ENCODE measurements at regions of chr3 and their contacts with region 1.

Region 1: DNA sequence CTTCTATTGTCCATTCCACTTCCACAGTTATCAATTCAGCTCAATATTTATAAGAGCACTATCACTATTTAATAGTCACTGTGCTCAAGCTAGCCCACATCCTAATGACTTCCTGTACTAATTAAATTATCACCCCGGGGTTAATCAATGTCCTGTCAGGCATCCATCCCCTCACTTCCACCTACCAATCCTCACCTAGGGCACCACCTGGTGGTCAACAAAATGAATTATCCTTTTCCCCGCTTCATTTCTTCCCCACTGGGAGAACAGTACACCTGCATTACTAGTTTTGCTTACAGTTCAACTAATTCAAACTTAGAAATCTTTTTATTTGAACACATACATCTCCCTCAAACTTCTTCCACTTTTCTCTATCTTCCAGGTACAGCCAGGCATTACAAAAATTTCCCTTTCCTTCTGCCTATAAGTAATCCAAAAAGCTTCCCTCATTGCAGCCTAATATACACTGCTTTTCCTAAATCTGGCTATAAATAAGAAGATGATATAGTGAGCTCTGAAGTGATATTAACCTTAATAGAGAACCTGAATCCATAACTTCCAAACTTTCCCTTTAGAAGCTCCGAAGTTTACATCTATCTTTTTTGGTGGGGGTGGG is 68.5 kb downstream of the TMCC1 start:
- DNase-seq: peak; percentile 33 to 68 (median 55)
- H3K4me3 ChIP-seq: no peak overlapping the region
- H3K4me3 Mint-ChIP-seq: no peak overlapping the region
- H3K27ac ChIP-seq: no peak overlapping the region
- H3K27ac Mint-ChIP-seq: peak overlapping the region in 5 of 7 donors; percentile 13 to 73 (median 16)
- H3K4me1 ChIP-seq: peaks cover 48 to 54% of the 10 kb centered on the region in 2 donors
- H3K4me1 Mint-ChIP-seq: peaks cover 51% of the 10 kb centered on the region
- H3K27me3 ChIP-seq: no peaks in the 10 kb centered on the region
- H3K27me3 Mint-ChIP-seq: peaks cover 0 to 2% (median 0%) of the 10 kb centered on the region in 3 donors
- CTCF ChIP-seq: peak; percentile 89

Region 2: DNA sequence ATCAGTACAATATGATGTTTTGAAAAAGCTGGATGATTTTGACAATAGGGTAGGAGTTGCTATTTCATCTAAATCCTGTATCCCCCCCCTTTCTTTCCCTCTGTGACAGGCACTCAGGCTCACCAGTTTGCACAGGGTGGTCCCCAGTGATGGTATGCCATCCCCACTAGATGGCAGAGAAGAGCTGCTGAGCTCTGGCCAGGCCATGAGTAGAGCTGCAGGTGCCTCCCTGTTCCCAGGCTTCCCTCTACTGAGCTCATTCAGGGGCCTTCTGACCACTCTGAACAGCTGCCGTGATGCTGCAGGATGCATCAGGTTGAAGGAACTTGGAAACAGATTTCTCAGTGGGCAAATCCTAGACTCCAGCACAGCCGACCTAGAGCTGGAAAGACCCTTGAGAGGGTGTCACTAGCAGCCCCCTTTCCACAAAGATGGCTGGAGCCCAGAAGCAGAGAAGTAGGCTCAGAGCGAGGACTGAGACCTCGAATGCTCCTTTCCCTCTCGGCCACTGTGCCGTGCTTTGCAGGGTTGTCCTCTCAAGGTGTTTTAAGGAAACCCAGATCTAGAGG is 441.7 kb before region 1 on chr3:
- intact Hi-C with region 1: loop called in 1 of 2 experiments (anchors 5 kb)
- DNase-seq: peak; percentile 12 to 36 (median 34)
- H3K4me3 ChIP-seq: no peak overlapping the region
- H3K4me3 Mint-ChIP-seq: no peak overlapping the region
- H3K27ac ChIP-seq: no peak overlapping the region
- H3K27ac Mint-ChIP-seq: peak overlapping the region in 1 of 7 donors; percentile 11
- H3K4me1 ChIP-seq: peaks cover 6% of the 10 kb centered on the region in 2 donors
- H3K4me1 Mint-ChIP-seq: peaks cover 8% of the 10 kb centered on the region
- H3K27me3 ChIP-seq: no peaks in the 10 kb centered on the region
- H3K27me3 Mint-ChIP-seq: no peaks in the 10 kb centered on the region
- CTCF ChIP-seq: peak; percentile 72

Region 3: DNA sequence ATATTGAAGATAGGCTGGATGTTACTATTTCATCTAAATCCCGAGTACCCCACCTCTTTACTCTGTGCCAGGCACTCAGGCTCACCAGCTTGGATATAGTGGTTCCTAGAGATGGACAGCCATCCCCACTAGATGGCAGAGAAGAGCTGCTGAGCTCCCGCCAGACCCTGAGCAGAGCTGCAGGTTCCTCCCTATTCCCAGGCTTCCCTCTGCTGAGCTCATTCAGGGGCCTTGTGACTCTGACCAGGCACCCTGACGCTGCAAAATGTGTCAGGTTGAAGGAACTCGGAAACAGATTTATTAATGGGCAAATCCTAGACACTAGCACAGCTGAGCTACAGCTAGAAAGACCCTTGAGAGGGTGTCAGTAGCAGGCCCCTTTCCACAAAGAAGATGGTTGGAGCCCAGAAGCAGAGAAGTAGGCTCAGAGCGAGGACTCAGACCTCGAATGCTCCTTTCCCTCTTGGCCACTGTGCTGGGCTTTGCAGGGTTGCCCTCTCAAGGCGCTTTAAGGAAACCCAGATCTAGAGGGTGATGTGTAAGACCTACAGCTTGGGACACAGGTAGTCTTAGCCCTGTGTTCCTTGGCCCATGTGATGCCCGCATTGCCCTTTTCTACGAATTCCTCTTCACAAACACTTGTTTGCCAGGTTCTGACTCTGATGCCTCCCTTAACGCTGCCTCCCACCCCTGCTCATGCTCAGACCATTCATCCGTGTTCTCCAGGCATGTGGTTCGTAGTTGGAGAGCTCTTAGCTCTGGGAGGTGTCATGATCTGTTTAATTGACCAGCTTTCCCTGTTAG is 334.6 kb before region 1 on chr3:
- intact Hi-C with region 1: loop called (anchors 2 to 5 kb)
- DNase-seq: peak; percentile 94 to 98 (median 96)
- H3K4me3 ChIP-seq: no peak overlapping the region
- H3K4me3 Mint-ChIP-seq: peak overlapping the region in 1 of 2 donors; percentile 26
- H3K27ac ChIP-seq: peak overlapping the region; percentile 89
- H3K27ac Mint-ChIP-seq: peak overlapping the region; percentile 87 to 98 (median 94)
- H3K4me1 ChIP-seq: peaks cover 50 to 55% of the 10 kb centered on the region in 2 donors
- H3K4me1 Mint-ChIP-seq: peaks cover 53% of the 10 kb centered on the region
- H3K27me3 ChIP-seq: no peaks in the 10 kb centered on the region
- H3K27me3 Mint-ChIP-seq: peaks cover 0 to 1% (median 0%) of the 10 kb centered on the region in 3 donors
- CTCF ChIP-seq: peak; percentile 91

Region 4: DNA sequence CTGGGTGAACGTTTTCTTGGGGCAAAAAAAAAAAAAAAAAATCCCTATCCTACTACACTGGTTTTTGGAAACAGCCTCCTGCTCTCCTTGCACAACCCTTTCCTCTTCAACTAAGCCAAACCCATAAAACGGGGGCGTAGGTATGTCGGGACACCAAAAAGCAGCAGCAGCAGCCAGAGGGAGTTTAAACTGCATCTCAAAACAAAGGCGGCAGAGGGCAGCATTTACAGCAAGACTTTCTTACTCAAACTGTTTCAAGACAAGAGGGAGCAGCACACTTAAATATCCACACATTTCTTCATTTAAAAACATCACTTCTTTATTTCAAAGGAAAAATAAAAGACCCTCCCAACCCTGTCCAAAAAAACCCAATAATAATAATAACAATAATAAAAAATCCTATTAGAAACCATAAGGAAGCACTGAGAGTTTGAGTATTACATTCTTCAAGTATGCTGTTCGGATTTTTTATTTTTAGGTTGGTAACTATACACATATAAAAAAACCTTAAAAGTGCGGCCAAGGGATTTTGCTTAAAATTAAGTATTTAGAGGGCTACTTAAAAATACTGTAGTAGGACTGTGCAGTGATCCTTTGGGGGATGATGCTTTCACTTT is 174.7 kb before region 1 on chr3:
- intact Hi-C with region 1: loop called (anchors 2 to 10 kb)
- DNase-seq: peak; percentile 34 to 57 (median 47)
- H3K4me3 ChIP-seq: no peak overlapping the region
- H3K4me3 Mint-ChIP-seq: no peak overlapping the region
- H3K27ac ChIP-seq: no peak overlapping the region
- H3K27ac Mint-ChIP-seq: peak overlapping the region in 2 of 7 donors; percentile 33 to 73
- H3K4me1 ChIP-seq: peaks cover 4 to 5% of the 10 kb centered on the region in 2 donors
- H3K4me1 Mint-ChIP-seq: peaks cover 7% of the 10 kb centered on the region
- H3K27me3 ChIP-seq: no peaks in the 10 kb centered on the region
- H3K27me3 Mint-ChIP-seq: peaks cover 0 to 3% (median under 1%) of the 10 kb centered on the region in 3 donors
- CTCF ChIP-seq: peak; percentile 72

Measured in CD14-positive monocyte (primary cell).